Right cardiac atrium (tissue), 5 donors: ENCODE measurements at regions of chr17 and their contacts with region 1.

Region 1: DNA sequence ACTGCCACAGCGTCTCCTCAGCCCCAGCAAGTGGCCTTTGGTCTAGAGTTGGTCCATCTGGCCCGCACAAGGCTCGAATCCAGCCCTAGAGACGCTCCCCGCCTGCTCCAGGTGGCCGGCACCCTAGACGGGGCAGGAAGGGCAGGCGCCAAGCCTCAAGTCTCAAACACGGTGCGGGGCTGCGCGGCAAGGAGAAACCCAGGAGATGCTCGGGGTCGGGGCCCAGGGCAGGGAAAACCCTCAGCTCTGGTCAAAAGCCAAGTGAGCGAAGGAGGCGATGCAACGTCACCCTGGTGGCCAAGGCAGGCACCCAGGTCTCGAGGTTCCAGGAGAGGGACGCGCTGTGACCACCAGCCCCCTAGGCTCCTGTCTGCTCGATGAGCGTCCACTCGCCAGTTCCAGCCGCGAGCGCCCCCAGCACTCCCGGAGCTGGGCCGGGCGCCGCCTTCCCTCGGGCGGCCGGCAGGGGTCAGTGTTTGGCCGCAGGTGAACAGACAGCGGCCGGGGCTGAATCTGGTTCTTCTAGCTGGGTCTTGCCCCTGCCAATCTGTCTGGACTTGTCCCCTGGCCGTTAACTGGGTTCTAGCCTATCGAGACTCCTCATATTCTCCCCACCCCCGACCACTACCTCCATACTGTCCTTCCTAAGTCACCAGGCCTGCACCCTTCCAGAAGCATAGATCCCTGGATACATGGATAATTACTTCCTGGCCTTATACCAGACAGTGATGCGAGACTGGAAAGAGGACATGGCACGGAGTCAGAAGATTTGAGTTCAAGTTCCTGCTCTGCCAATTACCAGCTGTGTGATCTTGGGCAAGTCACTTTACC is 44.0 kb downstream of the PRAC1 start:
- DNase-seq: peak; percentile 51 to 84 (median 82)
- ATAC-seq: peak; percentile 80 to 83
- H3K4me3 ChIP-seq: no peak overlapping the region
- H3K27ac ChIP-seq: no peak overlapping the region
- H3K4me1 ChIP-seq: no peaks in the 10 kb centered on the region
- H3K27me3 ChIP-seq: peaks cover 3% of the 10 kb centered on the region

Region 2: GRCh38 chr17:48791128-48792032 is 113.0 kb after region 1 on chr17:
- intact Hi-C with region 1: loop called (anchors 2 to 10 kb)
- DNase-seq: peak; percentile 77 to 82 (median 78)
- ATAC-seq: peak; percentile 86 to 87
- H3K4me3 ChIP-seq: no peak overlapping the region
- H3K27ac ChIP-seq: no peak overlapping the region
- H3K4me1 ChIP-seq: no peaks in the 10 kb centered on the region
- H3K27me3 ChIP-seq: no peaks in the 10 kb centered on the region

Region 3: DNA sequence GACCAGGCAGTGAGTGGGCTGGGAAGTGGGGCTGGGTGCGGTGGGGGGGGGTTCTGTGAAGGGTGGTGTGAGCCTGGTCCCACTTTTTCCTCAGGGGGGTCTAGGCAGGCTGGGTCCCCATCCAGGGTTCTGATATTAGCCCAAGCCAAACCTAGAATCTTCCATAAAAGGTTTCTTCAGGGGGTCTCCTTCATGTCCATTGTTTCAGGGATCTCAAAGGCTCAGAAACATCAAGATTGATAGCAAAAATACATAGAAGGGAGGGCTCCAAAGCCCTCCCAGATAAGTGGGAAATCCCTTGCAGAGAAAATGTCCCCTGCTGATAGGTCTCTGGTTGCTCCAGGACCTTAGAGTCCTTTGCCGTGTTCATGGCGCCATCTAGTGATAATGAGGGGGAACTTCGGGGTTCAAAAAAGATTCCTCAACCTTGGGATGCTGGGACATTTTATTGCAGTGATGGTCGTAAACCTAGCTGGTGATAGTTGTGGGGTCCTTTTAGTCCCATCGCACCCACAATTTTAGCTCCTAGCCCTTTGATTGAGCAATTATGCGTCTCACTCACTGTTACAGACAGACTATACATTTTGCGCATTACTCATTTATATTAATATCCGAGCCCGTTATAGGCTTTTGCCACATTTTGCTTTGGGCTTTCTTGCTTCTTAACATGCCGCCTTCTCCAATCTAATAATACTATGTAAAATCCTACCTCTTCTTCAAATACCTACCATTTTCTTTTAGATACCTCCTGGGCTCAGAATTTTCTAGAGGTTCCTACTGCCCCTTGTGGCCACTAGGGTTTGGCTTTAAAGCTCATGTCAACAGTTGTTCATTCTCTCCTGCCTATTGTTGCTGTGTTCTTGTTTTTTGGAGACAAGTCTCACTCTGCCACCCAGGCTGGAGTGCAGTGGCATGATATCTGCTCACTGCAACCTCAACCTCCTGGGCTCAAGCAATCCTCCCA is 353.9 kb after region 1 on chr17:
- intact Hi-C with region 1: loop called in 1 of 4 experiments (anchors 10 kb)
- DNase-seq: no peak
- ATAC-seq: peak; percentile 29 to 72
- H3K4me3 ChIP-seq: no peak overlapping the region
- H3K27ac ChIP-seq: no peak overlapping the region
- H3K4me1 ChIP-seq: no peaks in the 10 kb centered on the region
- H3K27me3 ChIP-seq: no peaks in the 10 kb centered on the region